ENCODE measurements at regions of chr1 and their contacts with region 1.

Region 1: GRCh38 chr1:66242646-66243547 is 291.1 kb upstream of the SGIP1 start:
- DNase-seq: no peak
- H3K4me3 ChIP-seq: no peak overlapping the region
- CTCF ChIP-seq: peak; percentile 100

Region 2: GRCh38 chr1:65717815-65718454 is 525.0 kb before region 1 on chr1:
- CTCF ChIA-PET with region 1: interaction called, 31 read pairs
- POLR2A ChIA-PET with region 1: no interaction called
- DNase-seq: peak; percentile 29
- H3K4me3 ChIP-seq: no peak overlapping the region
- CTCF ChIP-seq: peak; percentile 30

Region 3: GRCh38 chr1:65958561-65959350 is 284.1 kb before region 1 on chr1:
- CTCF ChIA-PET with region 1: interaction called, 401 read pairs
- POLR2A ChIA-PET with region 1: no interaction called
- DNase-seq: no peak
- H3K4me3 ChIP-seq: no peak overlapping the region
- CTCF ChIP-seq: peak; percentile 23

Region 4: GRCh38 chr1:65979136-65980044 is 263.5 kb before region 1 on chr1:
- CTCF ChIA-PET with region 1: interaction called, 14 read pairs
- POLR2A ChIA-PET with region 1: no interaction called
- DNase-seq: no peak
- H3K4me3 ChIP-seq: no peak overlapping the region
- CTCF ChIP-seq: no peak

Region 5: GRCh38 chr1:66231217-66231616 is 11.7 kb before region 1 on chr1:
- CTCF ChIA-PET with region 1: interaction called, 39 read pairs
- POLR2A ChIA-PET with region 1: no interaction called
- DNase-seq: no peak
- H3K4me3 ChIP-seq: no peak overlapping the region
- CTCF ChIP-seq: no peak

Region 6: DNA sequence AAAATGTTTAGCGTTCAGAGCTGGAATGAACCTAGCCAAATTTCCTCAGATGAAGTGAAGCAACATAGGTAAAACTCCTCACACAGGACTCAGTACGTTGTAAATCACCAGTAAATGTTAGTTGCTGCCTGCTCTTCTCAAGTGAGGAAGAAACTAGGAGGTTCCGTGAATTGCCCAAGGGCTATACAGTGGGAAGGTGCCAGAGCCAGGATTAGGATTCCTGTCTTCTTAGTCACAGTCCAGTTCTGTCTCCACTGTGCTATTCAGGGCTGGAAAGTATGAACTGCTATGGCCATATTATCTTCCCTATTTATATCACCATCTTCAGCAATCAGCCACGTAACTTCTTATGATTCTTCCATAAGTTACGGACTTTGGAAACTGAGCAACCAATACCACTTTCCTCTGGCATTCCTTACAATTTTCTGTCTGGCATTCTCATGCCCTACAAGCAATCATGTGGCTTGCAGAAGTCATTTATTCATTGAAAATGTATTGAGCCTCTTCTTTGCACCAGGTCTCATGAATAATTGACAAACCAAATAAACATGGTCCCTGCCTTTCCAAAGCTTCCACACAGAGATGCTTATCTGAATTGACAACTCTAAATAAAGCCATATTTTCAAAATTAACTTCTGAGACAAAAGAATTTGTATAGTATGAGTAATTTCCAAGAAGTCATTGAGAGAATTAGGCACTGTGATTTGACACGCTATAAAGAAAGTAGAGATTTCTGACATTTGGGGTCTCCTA is 19.5 kb after region 1 on chr1:
- CTCF ChIA-PET with region 1: interaction called, 17 read pairs
- POLR2A ChIA-PET with region 1: no interaction called
- DNase-seq: peak; percentile 83
- H3K4me3 ChIP-seq: no peak overlapping the region
- CTCF ChIP-seq: no peak

Region 7: DNA sequence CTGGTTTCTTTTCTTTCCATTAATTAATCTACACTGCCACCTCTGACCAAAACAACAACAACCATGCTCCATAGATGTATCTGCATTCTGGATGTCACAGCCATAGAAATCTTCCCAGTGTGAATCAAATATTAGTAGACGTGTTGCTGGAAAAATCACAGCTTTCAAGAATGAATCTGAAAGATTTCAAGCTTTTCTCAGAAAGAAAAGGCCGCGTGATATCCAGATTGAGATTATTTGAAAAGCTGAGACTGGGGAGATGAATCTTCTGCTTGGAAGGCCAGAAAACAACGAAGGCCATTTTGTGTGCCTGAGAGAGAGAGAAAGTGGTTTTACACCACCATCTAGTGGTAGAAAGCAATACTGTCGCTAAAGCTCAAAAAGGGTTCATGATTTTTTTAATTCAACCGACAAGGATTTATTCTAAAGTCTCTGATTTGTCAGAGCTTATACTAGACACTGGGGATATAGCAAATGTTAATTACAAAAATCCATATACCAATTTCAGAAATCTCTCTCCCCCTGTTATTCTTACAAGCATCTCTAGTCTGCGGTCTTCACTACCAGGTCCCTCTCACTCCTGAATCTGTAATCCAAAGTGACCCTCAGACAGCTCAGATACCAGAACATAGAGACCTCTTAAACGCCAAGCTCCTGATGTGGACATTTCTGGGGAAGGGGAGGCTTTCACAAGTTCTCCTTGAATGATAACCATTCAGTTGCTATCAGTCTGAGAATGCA is 203.5 kb after region 1 on chr1:
- CTCF ChIA-PET with region 1: interaction called, 807 read pairs
- POLR2A ChIA-PET with region 1: interaction called, 3 read pairs
- DNase-seq: peak; percentile 26
- H3K4me3 ChIP-seq: no peak overlapping the region
- CTCF ChIP-seq: peak; percentile 60

Region 8: DNA sequence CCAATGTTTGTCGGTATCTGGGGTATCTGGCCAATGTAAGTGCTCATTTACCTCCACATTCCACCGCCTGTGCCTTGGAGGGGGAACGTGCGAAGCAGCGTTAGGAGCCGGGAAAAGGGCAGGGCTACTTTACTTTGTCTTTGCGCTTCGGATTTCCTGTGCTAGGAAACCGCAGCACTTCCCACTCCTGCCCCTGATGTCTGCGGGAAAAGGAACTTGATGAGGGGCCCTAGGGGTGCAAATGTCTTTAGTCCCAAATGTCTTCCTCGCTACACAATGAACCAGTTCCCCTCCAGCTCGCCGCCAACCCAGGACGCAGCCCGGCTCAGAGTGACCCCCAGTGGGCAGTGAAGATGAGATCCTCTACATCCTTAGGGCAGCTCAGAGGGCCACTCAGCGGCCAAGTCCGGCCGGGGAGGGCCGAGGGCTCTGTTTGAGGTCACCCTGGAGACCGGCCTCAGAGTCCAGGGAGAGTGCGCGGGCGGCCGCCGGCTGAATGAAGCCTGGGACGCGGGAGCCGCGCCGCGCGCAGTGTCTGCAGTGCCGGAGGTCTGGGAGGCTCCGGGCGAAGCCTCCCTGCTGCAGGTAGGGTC is 509.2 kb after region 1 on chr1 and contains the start of gene DYNLT5:
- CTCF ChIA-PET with region 1: no interaction called
- POLR2A ChIA-PET with region 1: no interaction called
- DNase-seq: no peak
- H3K4me3 ChIP-seq: peak within 1 kb of the TSS; percentile 53
- CTCF ChIP-seq: peak; percentile 44

Region 9: GRCh38 chr1:67256291-67257172 is 1013.6 kb after region 1 on chr1:
- CTCF ChIA-PET with region 1: no interaction called
- POLR2A ChIA-PET with region 1: no interaction called
- DNase-seq: no peak
- H3K4me3 ChIP-seq: no peak overlapping the region
- CTCF ChIP-seq: no peak

Measured in AG04449 (cell line).